AG04450 (cell line): ENCODE measurements at regions of chr1 and their contacts with region 1.

Region 1: DNA sequence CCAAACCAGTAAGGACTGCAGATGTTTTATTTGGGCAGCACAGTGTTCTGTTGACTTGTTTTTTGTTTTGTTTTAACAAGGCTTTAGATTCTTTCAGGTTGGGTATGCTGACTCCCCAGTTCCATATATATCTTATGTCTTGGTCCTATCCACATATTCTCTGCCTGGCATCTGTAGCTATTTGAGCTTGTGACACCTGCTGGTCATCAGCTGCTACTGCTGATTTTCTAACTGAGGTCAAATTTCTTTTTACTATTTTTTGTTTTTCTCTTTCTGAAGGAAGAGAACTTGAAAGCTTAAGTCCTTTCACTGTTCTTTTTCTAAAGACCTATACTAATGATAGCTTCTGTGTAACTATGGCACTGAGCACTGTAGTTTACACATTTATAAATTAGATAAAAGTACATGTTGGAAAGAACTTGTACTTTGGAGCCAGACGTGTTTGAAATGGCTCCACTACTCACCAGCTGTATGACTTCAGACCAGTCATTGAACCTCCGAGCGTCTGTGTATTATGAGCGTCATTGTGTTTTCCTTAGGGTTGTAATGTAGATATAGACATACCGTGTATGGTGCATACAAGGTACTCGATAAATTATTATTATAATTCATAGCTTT is 109.4 kb downstream of the NRDC start:
- DNase-seq: peak; percentile 34
- H3K4me3 ChIP-seq: no peak overlapping the region
- H3K27ac ChIP-seq: no peak overlapping the region
- H3K27me3 ChIP-seq: no peaks in the 10 kb centered on the region
- CTCF ChIP-seq: peak; percentile 91

Region 2: GRCh38 chr1:51535006-51535592 is 234.0 kb before region 1 on chr1:
- CTCF ChIA-PET with region 1: interaction called, 29 read pairs
- POLR2A ChIA-PET with region 1: no interaction called
- DNase-seq: peak; percentile 29
- H3K4me3 ChIP-seq: no peak overlapping the region
- H3K27ac ChIP-seq: no peak overlapping the region
- H3K27me3 ChIP-seq: no peaks in the 10 kb centered on the region
- CTCF ChIP-seq: peak; percentile 87

Region 3: DNA sequence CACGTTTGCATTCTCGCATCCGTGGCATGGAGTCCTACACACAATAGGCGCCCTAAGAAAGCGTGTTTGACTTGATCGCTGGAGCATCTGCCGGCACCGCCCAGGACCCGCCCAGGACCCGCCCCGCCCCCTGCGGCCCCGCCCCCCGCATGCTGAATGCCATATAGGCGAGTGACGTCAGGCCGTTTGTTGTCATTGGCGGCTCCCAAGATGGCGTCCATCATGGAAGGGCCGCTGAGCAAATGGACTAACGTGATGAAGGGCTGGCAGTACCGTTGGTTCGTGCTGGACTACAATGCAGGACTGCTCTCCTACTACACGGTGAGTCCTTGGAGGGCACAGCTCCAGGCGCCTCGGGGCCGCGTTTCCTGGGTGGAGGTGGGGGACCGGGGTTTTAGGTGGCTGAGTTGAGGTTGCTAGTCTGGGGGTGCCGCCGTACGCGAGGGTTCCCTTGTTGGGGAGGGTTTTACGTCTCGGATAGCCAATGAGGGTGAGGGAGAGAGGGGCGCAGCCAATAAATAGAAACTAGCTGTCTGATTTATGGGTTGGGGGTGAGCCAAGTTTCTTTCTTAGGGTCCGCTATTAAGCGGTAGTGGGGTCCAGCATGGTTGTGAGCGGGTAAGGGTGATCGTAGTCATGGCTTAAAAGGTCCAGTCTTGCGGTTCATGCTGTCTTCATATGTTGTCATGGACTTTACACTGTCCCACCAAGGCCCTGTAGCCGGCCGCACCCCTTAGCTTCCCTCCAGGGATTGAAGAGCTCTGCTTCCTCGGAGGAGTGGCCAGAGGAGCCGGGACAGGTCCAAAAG is 152.0 kb before region 1 on chr1 and contains the start of gene OSBPL9:
- CTCF ChIA-PET with region 1: interaction called, 21 read pairs
- POLR2A ChIA-PET with region 1: no interaction called
- DNase-seq: peak; percentile 79
- H3K4me3 ChIP-seq: peak within 1 kb of the TSS; percentile 97
- H3K27ac ChIP-seq: peak within 1 kb of the TSS; percentile 79
- H3K27me3 ChIP-seq: no peaks in the 10 kb centered on the region
- CTCF ChIP-seq: no peak
- polyA plus RNA-seq, gene OSBPL9: 66.5 and 69.6 TPM in 2 replicates

Region 4: GRCh38 chr1:51648180-51649109 is 120.6 kb before region 1 on chr1:
- CTCF ChIA-PET with region 1: interaction called, 11 read pairs
- POLR2A ChIA-PET with region 1: no interaction called
- DNase-seq: peak; percentile 67
- H3K4me3 ChIP-seq: 0 out of 2 replicates have a peak overlapping the region, but pooled peaks have one; percentile 12
- H3K27ac ChIP-seq: peak overlapping the region; percentile 80
- H3K27me3 ChIP-seq: no peaks in the 10 kb centered on the region
- CTCF ChIP-seq: no peak

Region 5: GRCh38 chr1:51738681-51739080 is 30.4 kb before region 1 on chr1:
- CTCF ChIA-PET with region 1: interaction called, 10 read pairs
- POLR2A ChIA-PET with region 1: no interaction called
- DNase-seq: no peak
- H3K4me3 ChIP-seq: no peak overlapping the region
- H3K27ac ChIP-seq: no peak overlapping the region
- H3K27me3 ChIP-seq: no peaks in the 10 kb centered on the region
- CTCF ChIP-seq: no peak